Gastrocnemius medialis (tissue), 4 donors: ENCODE measurements at regions of chr6 and their contacts with region 1.

Region 1: DNA sequence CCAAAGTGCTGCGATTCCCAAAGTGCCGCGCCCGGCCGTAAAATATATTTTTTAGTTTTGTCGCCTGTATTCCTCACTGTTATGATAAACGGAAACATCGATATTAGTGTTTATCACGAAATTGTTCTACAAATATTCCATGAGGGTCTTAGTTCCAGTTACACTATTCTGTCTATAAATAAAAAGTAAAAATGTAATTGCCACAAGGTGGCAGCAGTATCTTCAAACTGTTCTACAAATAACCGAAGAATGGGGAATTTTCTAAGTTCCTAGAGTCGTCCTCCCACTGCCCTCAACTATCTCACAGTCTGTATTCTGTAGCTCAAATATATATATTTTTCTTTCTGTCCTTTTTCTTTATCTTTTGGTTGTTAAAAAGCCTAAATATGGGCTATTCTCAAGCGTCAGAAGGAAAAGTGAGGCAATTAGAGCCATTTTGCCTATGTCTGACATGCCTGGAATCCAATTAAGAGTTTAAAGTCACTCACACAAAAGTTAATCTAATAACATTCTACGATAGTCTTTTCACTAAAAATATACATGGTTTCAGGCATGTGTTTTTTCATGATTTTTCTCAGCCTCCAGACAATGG is 14.2 kb upstream of the FAM162B start:
- DNase-seq: no peak
- ATAC-seq: no peak
- H3K4me3 ChIP-seq: peak overlapping the region in 3 of 4 donors; percentile 4 to 15 (median 4)
- H3K27ac ChIP-seq: no peak overlapping the region
- H3K4me1 ChIP-seq: no peaks in the 10 kb centered on the region
- H3K27me3 ChIP-seq: no peaks in the 10 kb centered on the region
- CTCF ChIP-seq: peak; percentile 4 to 46 (median 30)
- POLR2A ChIP-seq: no peak

Region 2: GRCh38 chr6:116847227-116847626 is 67.6 kb after region 1 on chr6:
- in situ Hi-C with region 1: no loop called
- intact Hi-C with region 1: loop called (anchors 10 kb)
- DNase-seq: no peak
- ATAC-seq: no peak
- H3K4me3 ChIP-seq: no peak overlapping the region
- H3K27ac ChIP-seq: no peak overlapping the region
- H3K4me1 ChIP-seq: no peaks in the 10 kb centered on the region
- H3K27me3 ChIP-seq: no peaks in the 10 kb centered on the region
- CTCF ChIP-seq: peak in 2 of 5 experiments; percentile 23 to 26
- POLR2A ChIP-seq: no peak